Activated CD8-positive, alpha-beta T cell treated with anti-CD3 and anti-CD28 coated beads, Interleukin-2, amount 10 ng/mL, durations not matched to agents 7 days and 5 days (primary cell): ENCODE measurements at regions of chr19 and their contacts with region 1.

Region 1: GRCh38 chr19:49640113-49640898 is at the start of gene RRAS:
- DNase-seq: peak; percentile 100
- ATAC-seq: peak; percentile 77
- H3K4me3 Mint-ChIP-seq: peak within 1 kb of the TSS; percentile 90
- H3K27ac Mint-ChIP-seq: peak within 1 kb of the TSS; percentile 98
- H3K4me1 Mint-ChIP-seq: peaks cover 55% of the 10 kb centered on the region
- H3K27me3 Mint-ChIP-seq: peaks cover 4% of the 10 kb centered on the region
- total RNA-seq, gene RRAS: 8.1 to 8.4 TPM

Region 2: DNA sequence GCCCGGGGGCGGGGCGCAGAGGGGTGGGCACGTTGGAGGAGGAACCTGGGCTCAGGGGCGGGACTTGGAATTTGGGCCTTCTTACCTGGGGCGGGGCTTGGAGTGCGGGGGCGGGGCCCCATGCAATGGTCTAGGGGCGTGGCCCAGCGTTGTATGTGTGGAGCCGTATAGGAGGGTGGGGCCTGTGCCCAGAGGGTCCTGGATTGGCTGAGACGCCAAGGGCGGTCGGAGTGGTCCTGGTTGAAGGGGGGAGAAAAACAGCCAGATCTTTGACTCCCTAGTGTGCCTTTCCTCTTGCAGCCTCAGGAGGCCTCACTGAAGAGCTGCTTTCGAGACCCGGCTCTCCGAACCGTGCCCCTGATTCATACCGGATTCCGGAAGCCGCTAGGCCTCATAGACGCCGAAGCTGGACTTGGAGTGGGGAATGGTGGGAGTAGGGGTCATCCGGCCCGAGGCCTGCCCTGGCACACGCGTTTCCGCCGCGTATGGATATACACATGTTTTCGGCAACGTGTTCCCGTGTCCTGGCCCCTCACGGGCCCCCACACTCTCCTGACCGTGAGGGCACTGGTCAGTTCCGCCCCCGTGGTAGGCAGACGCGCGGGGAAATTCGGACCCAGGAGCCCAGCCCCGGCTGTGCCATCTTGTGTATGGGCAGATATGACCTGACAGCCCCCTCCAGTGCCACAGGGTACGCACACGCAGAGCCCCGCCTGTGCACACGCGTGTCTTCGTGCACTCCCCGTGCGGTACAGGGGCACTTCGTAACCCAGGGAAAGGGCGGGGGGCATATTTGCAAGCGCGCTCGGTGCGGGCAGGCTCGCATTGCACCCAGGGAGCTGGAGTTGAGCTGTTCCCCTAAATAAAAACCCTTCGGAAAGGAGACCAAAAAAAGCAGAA is 50.0 kb before region 1 on chr19:
- CTCF ChIA-PET with region 1: interaction called, 4 read pairs
- POLR2A ChIA-PET with region 1: interaction called, 18 read pairs
- DNase-seq: peak; percentile 98
- ATAC-seq: peak; percentile 85
- H3K4me3 Mint-ChIP-seq: peak overlapping the region; percentile 80
- H3K27ac Mint-ChIP-seq: peak overlapping the region; percentile 92
- H3K4me1 Mint-ChIP-seq: peaks cover 31% of the 10 kb centered on the region
- H3K27me3 Mint-ChIP-seq: peaks cover 2% of the 10 kb centered on the region

Region 3: DNA sequence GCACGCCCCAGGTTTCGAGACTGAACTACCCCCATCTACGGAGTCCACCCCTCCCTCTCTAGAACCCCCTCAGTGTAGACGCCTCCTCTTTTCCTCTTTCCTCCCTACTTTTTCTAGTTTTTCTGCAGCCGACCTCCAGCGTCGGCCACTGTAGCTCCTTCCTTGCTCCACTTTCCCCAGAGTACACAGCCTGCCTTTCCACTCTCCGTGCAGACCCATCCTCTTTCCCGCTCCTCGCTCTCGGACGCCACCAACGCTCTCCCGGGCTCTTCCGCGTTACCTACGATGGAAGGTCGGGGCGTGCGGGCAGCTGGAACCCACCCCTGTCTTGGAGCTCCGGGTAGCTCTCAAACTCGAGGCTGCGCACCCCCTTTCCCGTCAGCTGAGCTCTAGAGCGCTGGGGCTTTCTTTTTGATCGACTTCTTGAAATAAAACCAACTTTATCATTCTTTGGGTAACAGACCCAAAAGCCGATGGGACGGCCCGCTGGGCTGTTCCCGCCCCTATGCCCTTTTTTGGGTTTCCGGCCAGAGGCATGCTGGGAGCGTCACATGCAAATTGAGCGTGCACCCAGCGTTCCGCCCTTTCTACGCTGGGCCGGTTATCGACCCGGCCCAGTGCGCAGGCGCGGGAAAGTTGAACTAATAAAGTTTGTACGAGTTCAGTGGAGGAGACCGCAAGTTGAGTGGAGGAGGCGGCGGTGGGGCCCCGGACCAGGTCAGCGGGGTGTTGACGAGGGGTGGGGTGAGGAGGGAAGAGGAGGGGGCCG is 25.2 kb after region 1 on chr19 and contains the starts of genes BCL2L12 and IRF3:
- CTCF ChIA-PET with region 1: interaction called, 11 read pairs
- POLR2A ChIA-PET with region 1: interaction called, 38 read pairs
- DNase-seq: peak; percentile 99
- ATAC-seq: peak; percentile 87
- H3K4me3 Mint-ChIP-seq: peak within 1 kb of the TSS; percentile 94
- H3K27ac Mint-ChIP-seq: peak within 1 kb of the TSS; percentile 92
- H3K4me1 Mint-ChIP-seq: peaks cover 35% of the 10 kb centered on the region
- H3K27me3 Mint-ChIP-seq: no peaks in the 10 kb centered on the region
- total RNA-seq, gene BCL2L12: 84.7 to 87.7 TPM
- total RNA-seq, gene IRF3: 133 to 137 TPM